HepG2 (cell line): ENCODE measurements at regions of chr18 and their contacts with region 1.

Region 1: DNA sequence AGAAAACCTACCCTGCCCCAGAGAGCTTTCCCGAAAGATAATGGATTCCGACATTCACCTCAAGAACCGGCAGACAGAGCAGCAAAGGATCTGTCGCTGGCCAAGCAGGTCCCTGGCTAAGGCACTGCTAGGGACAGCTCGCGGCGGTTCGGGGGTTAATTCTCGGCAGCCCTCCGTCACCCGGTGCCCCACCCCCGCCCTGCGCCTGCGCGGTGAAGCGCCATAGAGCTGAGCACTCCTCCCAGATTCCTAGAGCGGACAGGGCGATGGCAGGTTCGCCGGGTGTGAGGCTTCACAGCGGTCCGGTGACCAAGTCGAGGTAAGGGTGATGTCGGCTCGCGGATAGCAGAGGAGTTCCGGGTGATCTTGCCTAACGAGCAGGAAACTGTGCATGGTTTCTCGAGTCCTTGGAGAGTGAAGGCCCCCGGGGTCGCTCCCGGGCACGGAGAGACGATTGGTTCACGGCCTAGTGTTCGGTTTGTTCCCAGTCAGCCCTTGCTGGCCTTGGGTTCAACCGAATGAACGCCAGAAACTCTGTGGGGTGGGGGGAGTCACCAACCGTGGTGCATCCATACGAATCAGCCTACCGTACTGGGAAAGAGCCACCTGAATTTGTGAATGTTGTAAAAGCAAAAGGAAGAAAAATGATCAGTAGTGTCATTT is at the start of gene ZSCAN30:
- DNase-seq: peak; percentile 90
- ATAC-seq: peak; percentile 99
- H3K4me3 ChIP-seq: peak within 1 kb of the TSS; percentile 85 to 97 (median 93)
- H3K27ac ChIP-seq: peak within 1 kb of the TSS; percentile 81
- H3K4me1 ChIP-seq: peaks cover 34% of the 10 kb centered on the region
- H3K27me3 ChIP-seq: no peaks in the 10 kb centered on the region; a peak in 1 of 5 replicates
- CTCF ChIP-seq: no peak; the same call in 1 of the 2 replicates
- EP300 ChIP-seq: peak; percentile 40 to 65; a peak in 2 of 4 replicates
- POLR2A ChIP-seq: peak; percentile 88 to 94
- RAD21 ChIP-seq: 0 out of 2 replicates have a peak, but pooled peaks have one; percentile 8
- total RNA-seq, gene ZSCAN30: 6.8 and 7.7 TPM in 2 replicates

Region 2: GRCh38 chr18:35231052-35231451 is 59.2 kb before region 1 on chr18:
- CTCF ChIA-PET with region 1: no interaction called
- POLR2A ChIA-PET with region 1: no interaction called
- in situ Hi-C with region 1: no loop called
- intact Hi-C with region 1: loop called (anchors 5 kb)
- DNase-seq: peak; percentile 87
- ATAC-seq: peak; percentile 97
- H3K4me3 ChIP-seq: peak overlapping the region in 2 of 3 experiments; percentile 19 to 28; a peak in 2 of 6 replicates
- H3K27ac ChIP-seq: no peak overlapping the region
- H3K4me1 ChIP-seq: no peaks in the 10 kb centered on the region
- H3K27me3 ChIP-seq: no peaks in the 10 kb centered on the region
- CTCF ChIP-seq: peak; percentile 90
- EP300 ChIP-seq: 0 out of 4 replicates have a peak, but pooled peaks of 1 of the 2 experiments have one; percentile 15
- POLR2A ChIP-seq: no peak
- RAD21 ChIP-seq: peak; percentile 85

Region 3: GRCh38 chr18:35240664-35241447 is 49.3 kb before region 1 on chr18 and contains the start of gene ZNF397:
- CTCF ChIA-PET with region 1: no interaction called
- POLR2A ChIA-PET with region 1: interaction called, 21 read pairs
- in situ Hi-C with region 1: no loop called
- intact Hi-C with region 1: loop called (anchors 2 kb)
- DNase-seq: peak; percentile 94
- ATAC-seq: peak; percentile 99
- H3K4me3 ChIP-seq: peak within 1 kb of the TSS; percentile 74 to 89 (median 79)
- H3K27ac ChIP-seq: peak within 1 kb of the TSS; percentile 88
- H3K4me1 ChIP-seq: peaks cover 10% of the 10 kb centered on the region
- H3K27me3 ChIP-seq: no peaks in the 10 kb centered on the region; a peak in 1 of 5 replicates
- CTCF ChIP-seq: 0 out of 2 replicates have a peak, but pooled peaks have one; percentile 6
- EP300 ChIP-seq: 0 out of 4 replicates have a peak, but pooled peaks of 1 of the 2 experiments have one; percentile 5
- POLR2A ChIP-seq: peak; percentile 82 to 85
- RAD21 ChIP-seq: peak; percentile 33
- total RNA-seq, gene ZNF397: 9.4 and 10.0 TPM in 2 replicates

Region 4: DNA sequence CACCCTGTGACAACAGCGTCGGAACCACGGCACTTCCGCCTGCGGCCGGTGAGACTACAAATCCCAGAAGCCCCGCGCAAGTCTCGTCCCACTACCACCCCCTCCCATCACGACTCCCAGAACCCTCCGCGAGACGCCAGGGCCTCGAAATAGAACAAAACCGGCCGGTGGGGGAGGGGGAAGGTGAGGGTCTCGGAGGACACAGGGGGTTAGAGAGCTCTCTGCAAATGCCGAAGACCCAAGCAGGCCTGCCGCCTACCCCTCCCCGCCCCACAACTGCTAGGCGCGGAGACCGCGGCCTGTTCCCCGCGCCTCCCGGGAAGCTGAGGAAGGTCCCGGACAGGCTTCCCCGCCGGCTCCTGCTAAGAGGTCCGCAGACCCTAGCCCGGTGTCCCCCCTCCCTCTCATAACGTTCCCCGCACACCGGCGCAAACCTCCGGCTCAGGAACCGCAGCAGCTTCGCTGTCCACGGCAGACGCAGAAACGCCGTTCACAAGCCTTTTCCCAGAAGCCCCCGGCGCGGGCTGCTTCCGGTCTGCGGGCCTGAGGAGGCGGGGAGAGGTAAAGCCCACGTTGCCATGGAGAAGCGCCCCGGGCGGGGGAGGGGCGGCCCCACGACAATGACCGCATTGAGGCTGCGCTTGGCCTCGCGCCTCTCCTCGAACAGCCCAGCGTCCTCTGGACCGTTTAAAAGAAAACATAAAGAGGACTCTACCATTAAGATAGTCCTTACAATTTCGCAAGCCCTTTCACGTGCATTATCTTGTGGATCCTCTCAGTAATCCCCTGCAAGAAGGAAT is 53.9 kb after region 1 on chr18 and contains the start of gene ZNF24:
- CTCF ChIA-PET with region 1: no interaction called
- POLR2A ChIA-PET with region 1: interaction called, 13 read pairs
- in situ Hi-C with region 1: no loop called
- intact Hi-C with region 1: loop called (anchors 2 kb)
- DNase-seq: peak; percentile 91
- ATAC-seq: peak; percentile 93
- H3K4me3 ChIP-seq: peak within 1 kb of the TSS; percentile 91 to 93 (median 92)
- H3K27ac ChIP-seq: peak within 1 kb of the TSS; percentile 98
- H3K4me1 ChIP-seq: peaks cover 56% of the 10 kb centered on the region
- H3K27me3 ChIP-seq: no peaks in the 10 kb centered on the region
- CTCF ChIP-seq: no peak
- EP300 ChIP-seq: peak; percentile 23 to 33; a peak in 1 of 4 replicates
- POLR2A ChIP-seq: peak; percentile 78 to 94
- RAD21 ChIP-seq: no peak
- total RNA-seq, gene ZNF24: 41.1 and 79.4 TPM in 2 replicates

Region 5: GRCh38 chr18:35386600-35387351 is 96.6 kb after region 1 on chr18:
- CTCF ChIA-PET with region 1: no interaction called
- POLR2A ChIA-PET with region 1: no interaction called
- in situ Hi-C with region 1: no loop called
- intact Hi-C with region 1: no loop called
- DNase-seq: peak; percentile 70
- ATAC-seq: peak; percentile 87
- H3K4me3 ChIP-seq: no peak overlapping the region
- H3K27ac ChIP-seq: no peak overlapping the region
- H3K4me1 ChIP-seq: peaks cover 7% of the 10 kb centered on the region
- H3K27me3 ChIP-seq: 0 out of 5 replicates have a peak, but pooled peaks cover 0 to 8% of the 10 kb centered on the region in 2 experiments
- CTCF ChIP-seq: peak; percentile 79
- EP300 ChIP-seq: no peak
- POLR2A ChIP-seq: no peak
- RAD21 ChIP-seq: peak; percentile 39

Region 6: DNA sequence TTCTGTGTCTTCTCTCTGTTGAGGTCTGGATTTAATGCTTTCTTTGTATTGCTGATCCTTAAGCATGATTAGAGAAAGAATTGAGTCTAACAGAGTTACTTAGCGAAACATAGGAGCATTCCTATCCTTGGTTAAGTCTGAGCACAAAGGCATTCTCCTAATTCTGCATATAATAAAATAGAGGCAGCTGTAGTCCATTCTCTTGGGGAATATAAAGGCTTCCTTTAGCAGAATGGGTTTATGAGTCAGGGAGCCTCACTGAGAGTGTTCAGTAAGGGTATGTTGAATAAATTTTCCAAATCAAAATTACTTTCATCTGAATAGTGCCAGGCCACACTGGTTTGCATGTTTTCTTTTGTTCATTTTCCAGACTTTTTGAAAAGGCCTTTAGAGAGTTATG is 392.8 kb after region 1 on chr18:
- CTCF ChIA-PET with region 1: no interaction called
- POLR2A ChIA-PET with region 1: no interaction called
- in situ Hi-C with region 1: no loop called
- intact Hi-C with region 1: no loop called
- DNase-seq: no peak
- ATAC-seq: no peak
- H3K4me3 ChIP-seq: no peak overlapping the region
- H3K27ac ChIP-seq: no peak overlapping the region
- H3K4me1 ChIP-seq: peaks cover 13% of the 10 kb centered on the region
- H3K27me3 ChIP-seq: no peaks in the 10 kb centered on the region
- CTCF ChIP-seq: no peak
- EP300 ChIP-seq: no peak
- POLR2A ChIP-seq: no peak
- RAD21 ChIP-seq: no peak